Left lung (tissue), 14 donors: ENCODE measurements at regions of chr11 and their contacts with region 1.

Region 1: GRCh38 chr11:32312865-32313403 is 122.4 kb downstream of the WT1 start:
- DNase-seq: peak in 1 of 4 donors; percentile 37
- ATAC-seq: peak; percentile 79
- H3K4me3 ChIP-seq: no peak overlapping the region
- H3K27ac ChIP-seq: no peak overlapping the region
- H3K4me1 ChIP-seq: no peaks in the 10 kb centered on the region
- H3K27me3 ChIP-seq: peaks cover 0 to 5% of the 10 kb centered on the region in 2 donors
- CTCF ChIP-seq: peak; percentile 49 to 51

Region 2: GRCh38 chr11:32069361-32070058 is 243.4 kb before region 1 on chr11:
- intact Hi-C with region 1: no loop called
- DNase-seq: no peak
- ATAC-seq: no peak
- H3K4me3 ChIP-seq: no peak overlapping the region
- H3K27ac ChIP-seq: no peak overlapping the region
- H3K4me1 ChIP-seq: no peaks in the 10 kb centered on the region
- H3K27me3 ChIP-seq: peaks cover 0 to 33% of the 10 kb centered on the region in 2 donors
- CTCF ChIP-seq: no peak

Region 3: DNA sequence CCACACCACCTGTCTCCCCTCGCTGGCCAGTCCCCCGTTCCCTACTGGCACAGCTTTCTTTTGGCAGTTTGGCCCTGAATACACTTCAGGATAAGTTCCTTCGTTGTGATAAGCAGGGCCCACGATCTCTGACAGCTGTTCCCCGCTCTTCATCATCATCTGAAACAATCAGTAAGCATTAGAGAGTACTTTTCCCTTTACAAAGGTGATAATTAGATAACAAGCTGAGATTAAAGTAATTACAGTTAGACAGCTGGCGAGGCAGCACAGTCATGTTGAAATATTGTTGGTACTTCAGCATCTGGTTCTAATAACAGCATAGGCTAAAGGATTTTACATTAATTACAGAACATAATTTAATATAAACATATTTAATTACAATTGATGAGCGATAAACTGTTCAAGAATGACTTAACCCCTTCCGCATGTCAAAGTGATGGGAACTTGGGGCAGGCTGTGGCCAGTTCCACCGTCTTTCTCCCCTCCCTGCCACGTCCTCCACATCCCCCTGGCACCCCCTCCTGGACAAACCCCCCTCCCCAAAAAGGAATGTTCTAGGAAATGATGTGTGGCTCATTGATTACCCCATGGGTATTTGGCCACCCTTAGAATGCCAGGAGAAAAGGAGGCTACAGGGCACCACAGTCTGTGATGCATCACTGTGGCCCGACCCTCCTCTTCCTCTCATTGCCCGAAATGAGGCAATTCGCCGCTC is 87.2 kb before region 1 on chr11:
- intact Hi-C with region 1: no loop called
- DNase-seq: no peak
- ATAC-seq: no peak
- H3K4me3 ChIP-seq: no peak overlapping the region
- H3K27ac ChIP-seq: no peak overlapping the region
- H3K4me1 ChIP-seq: no peaks in the 10 kb centered on the region
- H3K27me3 ChIP-seq: peaks cover 0 to 5% of the 10 kb centered on the region in 2 donors
- CTCF ChIP-seq: no peak

Region 4: DNA sequence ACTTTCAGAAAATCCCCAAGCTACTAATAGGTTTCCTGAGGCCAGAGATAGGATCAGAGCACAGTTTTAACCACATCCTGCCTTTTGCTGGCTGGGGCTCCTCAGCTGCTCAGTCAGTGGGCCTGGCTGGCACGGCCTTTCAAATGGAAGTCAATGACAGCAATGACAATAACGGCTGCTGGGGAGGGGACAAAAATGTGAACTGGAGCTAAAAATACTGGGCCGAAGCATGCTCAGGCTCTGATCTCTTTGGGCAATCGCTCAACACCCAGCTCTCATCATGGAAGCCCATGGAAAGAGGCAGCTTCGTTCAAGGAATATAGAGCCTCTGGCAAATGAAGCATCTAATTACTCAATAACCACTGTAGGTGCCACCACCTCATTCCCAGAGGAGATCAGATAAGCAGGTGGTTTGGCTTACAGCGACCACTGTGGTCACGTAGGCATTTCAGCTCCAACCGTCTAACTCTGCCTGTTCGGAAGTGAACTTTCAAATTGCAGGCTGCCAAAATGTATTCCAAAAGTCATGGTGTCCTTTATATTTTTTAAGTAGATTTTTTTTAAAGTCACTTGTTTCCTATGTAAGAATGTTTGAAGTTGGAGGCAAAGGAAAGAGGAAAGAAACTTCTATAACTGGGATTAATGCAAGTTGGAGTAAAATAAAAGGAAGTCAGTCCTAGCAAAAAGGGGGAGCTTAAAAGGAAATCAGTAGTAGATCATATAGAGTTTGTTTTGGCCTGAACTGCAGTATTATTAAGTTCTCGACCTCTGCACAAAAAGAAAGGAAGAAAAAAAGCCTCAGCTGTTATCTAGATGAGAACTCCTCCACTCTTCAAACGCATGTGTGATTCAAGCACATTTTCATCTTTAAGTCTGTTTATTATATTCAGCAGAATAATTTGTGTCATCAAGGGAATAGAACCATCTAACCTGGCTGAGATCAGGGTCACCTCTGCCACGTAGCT is 108.3 kb after region 1 on chr11:
- intact Hi-C with region 1: no loop called
- DNase-seq: no peak
- ATAC-seq: no peak
- H3K4me3 ChIP-seq: no peak overlapping the region
- H3K27ac ChIP-seq: no peak overlapping the region
- H3K4me1 ChIP-seq: no peaks in the 10 kb centered on the region
- H3K27me3 ChIP-seq: peaks cover 8 to 74% of the 10 kb centered on the region in 2 donors
- CTCF ChIP-seq: no peak

Region 5: GRCh38 chr11:32786811-32787210 is 473.9 kb after region 1 on chr11:
- intact Hi-C with region 1: loop called in 1 of 2 experiments (anchors 10 kb)
- DNase-seq: no peak
- ATAC-seq: no peak
- H3K4me3 ChIP-seq: no peak overlapping the region
- H3K27ac ChIP-seq: no peak overlapping the region
- H3K4me1 ChIP-seq: no peaks in the 10 kb centered on the region
- H3K27me3 ChIP-seq: no peaks in the 10 kb centered on the region
- CTCF ChIP-seq: no peak